Panc1 (cell line): ENCODE measurements at regions of chr1 and their contacts with region 1.

Region 1: GRCh38 chr1:84122780-84123382 is 21.2 kb upstream of the PRKACB start:
- DNase-seq: no peak
- ATAC-seq: peak; percentile 93
- H3K4me3 ChIP-seq: no peak overlapping the region
- H3K27ac ChIP-seq: no peak overlapping the region
- H3K4me1 ChIP-seq: no peaks in the 10 kb centered on the region
- H3K27me3 ChIP-seq: no peaks in the 10 kb centered on the region
- CTCF ChIP-seq: peak; percentile 94

Region 2: DNA sequence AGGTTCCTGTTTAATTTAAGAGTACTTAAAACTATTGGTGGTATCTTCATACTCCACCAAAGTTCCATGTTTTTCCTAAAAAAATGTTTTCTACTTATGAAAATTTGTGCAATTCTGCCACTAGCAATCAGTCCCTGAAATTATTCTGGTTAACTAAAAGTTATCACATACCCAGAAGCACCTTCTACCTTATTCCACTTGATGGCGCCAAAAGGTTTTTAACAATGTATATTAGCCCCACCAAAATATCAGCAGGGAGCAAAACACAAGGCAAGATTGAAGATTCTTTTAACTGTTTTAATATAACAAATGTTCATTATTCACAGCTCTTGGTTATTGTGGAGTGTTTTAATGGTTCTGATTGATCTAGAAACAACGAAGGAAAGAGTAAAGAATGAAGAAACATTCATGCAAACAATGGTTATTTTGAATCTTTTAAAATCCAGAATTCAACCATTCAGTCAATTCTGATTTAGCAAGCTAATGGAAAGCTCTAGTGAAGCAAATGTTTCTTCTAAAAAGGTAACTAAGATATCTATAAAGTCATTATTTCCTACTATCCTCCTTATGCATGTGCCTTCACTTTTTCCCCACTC is 191.1 kb before region 1 on chr1:
- CTCF ChIA-PET with region 1: interaction called, 5 read pairs
- POLR2A ChIA-PET with region 1: interaction called, 5 read pairs
- in situ Hi-C with region 1: no loop called
- intact Hi-C with region 1: loop called (anchors 1 kb)
- DNase-seq: peak; percentile 56
- ATAC-seq: peak; percentile 93
- H3K4me3 ChIP-seq: no peak overlapping the region
- H3K27ac ChIP-seq: no peak overlapping the region
- H3K4me1 ChIP-seq: no peaks in the 10 kb centered on the region
- H3K27me3 ChIP-seq: no peaks in the 10 kb centered on the region
- CTCF ChIP-seq: peak; percentile 88; the same call in 1 of the 2 replicates

Region 3: GRCh38 chr1:83978056-83978455 is 144.8 kb before region 1 on chr1:
- CTCF ChIA-PET with region 1: no interaction called
- POLR2A ChIA-PET with region 1: no interaction called
- in situ Hi-C with region 1: no loop called
- intact Hi-C with region 1: no loop called
- DNase-seq: no peak
- ATAC-seq: no peak
- H3K4me3 ChIP-seq: no peak overlapping the region
- H3K27ac ChIP-seq: no peak overlapping the region
- H3K4me1 ChIP-seq: no peaks in the 10 kb centered on the region
- H3K27me3 ChIP-seq: no peaks in the 10 kb centered on the region
- CTCF ChIP-seq: no peak

Region 4: GRCh38 chr1:83990749-83991148 is 132.1 kb before region 1 on chr1:
- CTCF ChIA-PET with region 1: interaction called, 3 read pairs
- POLR2A ChIA-PET with region 1: no interaction called
- in situ Hi-C with region 1: no loop called
- intact Hi-C with region 1: loop called (anchors 5 kb)
- DNase-seq: no peak
- ATAC-seq: no peak
- H3K4me3 ChIP-seq: no peak overlapping the region
- H3K27ac ChIP-seq: no peak overlapping the region
- H3K4me1 ChIP-seq: no peaks in the 10 kb centered on the region
- H3K27me3 ChIP-seq: no peaks in the 10 kb centered on the region
- CTCF ChIP-seq: peak; percentile 41; the same call in 1 of the 2 replicates

Region 5: DNA sequence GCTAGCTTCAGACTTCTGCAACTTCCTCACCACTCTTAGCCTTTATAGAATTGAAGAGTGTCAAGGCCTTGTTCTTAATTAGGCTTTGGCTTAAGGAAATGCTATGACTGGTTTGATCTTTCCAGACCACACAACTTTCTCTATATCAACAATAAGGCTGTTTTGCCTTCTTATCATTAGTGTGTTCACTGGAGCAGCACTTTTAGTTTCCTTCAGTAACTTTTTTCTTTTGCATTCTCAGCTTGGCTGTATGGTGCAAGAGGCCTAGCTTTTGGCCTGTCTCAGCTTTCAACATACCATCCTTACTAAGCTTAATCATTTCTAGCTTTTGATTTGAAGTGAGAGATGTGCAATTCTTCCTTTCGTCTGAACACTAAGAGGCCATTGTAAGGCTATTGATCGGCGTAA is 29.8 kb after region 1 on chr1:
- CTCF ChIA-PET with region 1: no interaction called
- POLR2A ChIA-PET with region 1: no interaction called
- in situ Hi-C with region 1: no loop called
- intact Hi-C with region 1: no loop called
- DNase-seq: no peak
- ATAC-seq: no peak
- H3K4me3 ChIP-seq: no peak overlapping the region
- H3K27ac ChIP-seq: no peak overlapping the region
- H3K4me1 ChIP-seq: peaks cover 9% of the 10 kb centered on the region; the same call in 1 of the 2 replicates
- H3K27me3 ChIP-seq: no peaks in the 10 kb centered on the region
- CTCF ChIP-seq: no peak